Right ventricle myocardium inferior (tissue), 1 donor: ENCODE measurements at regions of chr19 and their contacts with region 1.

Region 1: DNA sequence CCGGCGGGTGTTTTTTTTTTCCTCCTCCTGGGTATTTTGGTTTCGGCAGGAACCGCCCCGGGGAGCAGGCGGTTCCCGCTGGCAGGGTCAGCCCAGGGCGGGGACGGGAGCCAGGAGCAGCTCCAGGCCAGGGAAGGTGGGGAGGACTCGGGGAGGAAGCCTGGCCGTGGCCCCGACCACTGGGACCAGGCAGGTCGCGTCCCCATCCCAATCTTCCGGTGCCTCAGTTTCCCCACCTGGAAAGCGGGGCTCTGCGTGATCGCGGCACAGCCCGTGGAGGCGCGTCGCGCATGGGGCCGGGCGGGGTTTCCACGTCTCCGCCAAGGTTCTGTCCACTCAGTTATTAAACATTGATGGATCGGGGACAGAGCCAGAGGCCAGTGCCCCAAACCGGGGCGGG is 34.8 kb downstream of the IL12RB1 start:
- DNase-seq: no peak
- ATAC-seq: peak; percentile 59

Region 2: GRCh38 chr19:18021121-18021755 is 30.6 kb before region 1 on chr19:
- intact Hi-C with region 1: loop called (anchors 2 kb)
- DNase-seq: peak; percentile 93
- ATAC-seq: peak; percentile 30